ENCODE measurements at regions of chr9 and their contacts with region 1.

Region 1: DNA sequence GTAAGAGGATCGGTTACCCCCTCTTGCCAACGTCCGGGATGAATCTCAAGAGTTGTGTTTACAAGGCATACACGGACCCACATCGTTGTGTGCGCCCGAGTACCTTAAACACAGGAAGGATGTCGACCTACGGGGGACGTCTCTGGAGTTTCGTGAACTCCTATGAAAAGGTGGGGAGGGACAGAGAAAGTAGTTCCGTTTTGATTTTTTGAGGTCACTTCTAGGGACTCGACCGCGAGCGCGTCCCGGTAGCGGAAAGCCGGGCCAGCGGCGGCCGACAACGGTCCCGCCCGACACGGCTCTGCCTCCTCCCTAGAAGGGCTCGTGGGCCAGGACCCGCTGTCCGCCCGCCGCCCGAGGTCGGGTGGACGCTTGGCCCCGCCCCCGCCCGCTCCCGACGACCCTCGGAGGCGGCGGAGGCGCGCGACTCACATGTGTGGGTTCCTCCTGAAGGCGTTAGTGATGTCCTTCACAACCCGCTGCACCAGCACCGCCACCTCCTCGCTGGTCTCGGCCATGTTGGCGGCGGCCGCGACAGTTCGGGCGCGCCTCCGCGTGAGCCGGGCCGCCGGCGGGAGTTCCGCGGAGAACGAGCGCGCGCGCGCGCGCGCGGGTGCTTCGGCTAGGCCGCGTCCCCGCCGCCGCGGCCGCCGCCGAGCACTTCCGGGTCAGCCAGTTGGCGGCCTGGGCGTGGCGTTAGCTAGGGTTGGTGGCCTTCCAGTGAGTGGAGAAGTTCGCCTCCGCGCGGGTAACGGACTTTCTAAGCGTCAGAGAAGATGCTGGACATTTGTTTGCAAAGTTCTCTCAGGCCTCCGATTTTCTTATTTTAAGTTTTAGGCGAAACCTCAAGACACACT is at the start of gene PTAR1:
- DNase-seq: peak; percentile 97
- H3K4me3 Mint-ChIP-seq: peak within 1 kb of the TSS; percentile 98
- H3K27ac Mint-ChIP-seq: peak within 1 kb of the TSS; percentile 96
- H3K4me1 Mint-ChIP-seq: peaks cover 29% of the 10 kb centered on the region
- H3K27me3 Mint-ChIP-seq: no peaks in the 10 kb centered on the region
- total RNA-seq, gene PTAR1: 51.0 and 56.1 TPM in 2 replicates

Region 2: GRCh38 chr9:69174616-69175463 is 584.8 kb before region 1 on chr9:
- intact Hi-C with region 1: loop called (anchors 10 kb)
- DNase-seq: peak; percentile 80
- H3K4me3 Mint-ChIP-seq: peak overlapping the region; percentile 84
- H3K27ac Mint-ChIP-seq: peak overlapping the region; percentile 78
- H3K4me1 Mint-ChIP-seq: peaks cover 61% of the 10 kb centered on the region
- H3K27me3 Mint-ChIP-seq: peaks cover 24% of the 10 kb centered on the region

Region 3: DNA sequence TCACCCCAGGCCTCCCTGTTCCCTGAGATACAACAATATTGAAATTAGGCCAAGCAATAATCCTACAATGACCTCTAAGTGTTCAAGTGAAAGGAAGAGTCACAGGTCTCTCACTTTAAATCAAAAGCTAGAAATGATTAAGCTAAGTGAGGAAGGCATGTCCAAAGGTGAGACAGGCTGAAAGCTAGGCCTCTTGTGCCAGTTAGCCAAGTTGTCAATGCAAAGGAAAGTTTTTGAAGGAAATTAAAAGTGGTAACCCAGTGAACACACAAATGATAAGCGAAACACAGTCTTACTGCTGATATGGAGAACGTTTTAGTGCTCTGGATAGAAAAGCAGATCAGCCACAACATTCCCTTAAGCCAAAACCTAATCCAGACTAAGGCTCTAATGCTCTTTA is 39.7 kb before region 1 on chr9:
- intact Hi-C with region 1: loop called (anchors 5 kb)
- DNase-seq: no peak
- H3K4me3 Mint-ChIP-seq: no peak overlapping the region
- H3K27ac Mint-ChIP-seq: no peak overlapping the region
- H3K4me1 Mint-ChIP-seq: peaks cover 2% of the 10 kb centered on the region
- H3K27me3 Mint-ChIP-seq: no peaks in the 10 kb centered on the region

Region 4: GRCh38 chr9:69731348-69731747 is 28.3 kb before region 1 on chr9:
- intact Hi-C with region 1: loop called (anchors 2 kb)
- DNase-seq: no peak
- H3K4me3 Mint-ChIP-seq: no peak overlapping the region
- H3K27ac Mint-ChIP-seq: peak overlapping the region; percentile 69
- H3K4me1 Mint-ChIP-seq: peaks cover 15% of the 10 kb centered on the region
- H3K27me3 Mint-ChIP-seq: no peaks in the 10 kb centered on the region

Region 5: DNA sequence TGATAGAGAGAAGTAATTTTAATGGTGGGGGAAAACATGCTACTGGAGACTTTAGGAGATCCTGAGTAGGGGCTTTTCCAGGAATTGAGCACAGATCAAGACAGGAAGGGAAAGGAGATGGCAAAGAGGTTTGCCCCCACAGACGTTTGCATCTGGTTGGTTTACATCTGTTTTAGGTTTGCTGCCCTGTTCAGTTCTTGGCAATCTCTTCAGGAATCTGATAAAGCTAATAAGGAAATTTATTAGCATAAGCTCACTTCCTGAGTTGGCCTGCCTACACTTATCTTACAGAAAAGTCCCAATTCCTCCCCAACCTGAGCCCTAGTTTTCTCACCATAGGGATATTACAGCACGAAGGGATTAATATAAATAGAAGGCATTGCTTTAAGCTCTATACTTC is 57.6 kb after region 1 on chr9:
- intact Hi-C with region 1: loop called (anchors 2 kb)
- DNase-seq: no peak
- H3K4me3 Mint-ChIP-seq: no peak overlapping the region
- H3K27ac Mint-ChIP-seq: no peak overlapping the region
- H3K4me1 Mint-ChIP-seq: peaks cover 45% of the 10 kb centered on the region
- H3K27me3 Mint-ChIP-seq: peaks cover 25% of the 10 kb centered on the region

Measured in activated CD4-positive, alpha-beta T cell treated with anti-CD3 and anti-CD28 coated beads, Interleukin-2, amount 10 ng/mL, durations not matched to agents 24 days and 14 days (primary cell).